Panc1 (cell line): ENCODE measurements at regions of chr7 and their contacts with region 1.

Region 1: DNA sequence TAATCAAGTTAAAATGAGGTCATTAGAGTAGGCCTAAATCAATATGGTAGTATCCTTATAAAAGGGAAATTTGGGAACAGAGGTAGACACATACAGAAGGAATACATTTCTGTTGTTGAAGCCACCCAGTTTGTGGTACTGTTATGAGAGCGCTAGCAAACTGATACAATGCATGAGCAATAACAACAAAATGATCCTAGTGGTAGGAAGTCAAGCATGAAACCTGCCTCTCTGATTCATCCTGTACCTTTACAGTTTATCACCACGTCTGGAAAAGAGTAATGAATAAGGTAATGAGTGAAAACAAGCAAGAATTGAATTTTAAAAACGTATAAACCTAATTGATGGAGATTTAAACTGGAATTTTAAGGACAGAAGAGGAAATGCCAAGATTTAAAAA is 217.2 kb downstream of the PCLO start:
- DNase-seq: no peak
- ATAC-seq: no peak
- H3K4me3 ChIP-seq: no peak overlapping the region
- H3K27ac ChIP-seq: no peak overlapping the region
- H3K4me1 ChIP-seq: no peaks in the 10 kb centered on the region
- H3K27me3 ChIP-seq: no peaks in the 10 kb centered on the region
- CTCF ChIP-seq: no peak

Region 2: GRCh38 chr7:83072576-83073517 is 127.4 kb after region 1 on chr7:
- CTCF ChIA-PET with region 1: no interaction called
- POLR2A ChIA-PET with region 1: interaction called, 17 read pairs
- in situ Hi-C with region 1: no loop called
- intact Hi-C with region 1: no loop called
- DNase-seq: no peak
- ATAC-seq: no peak
- H3K4me3 ChIP-seq: no peak overlapping the region
- H3K27ac ChIP-seq: no peak overlapping the region
- H3K4me1 ChIP-seq: no peaks in the 10 kb centered on the region
- H3K27me3 ChIP-seq: no peaks in the 10 kb centered on the region
- CTCF ChIP-seq: peak; percentile 49; the same call in 1 of the 2 replicates

Region 3: GRCh38 chr7:83524286-83525075 is 579.0 kb after region 1 on chr7:
- CTCF ChIA-PET with region 1: no interaction called
- POLR2A ChIA-PET with region 1: no interaction called
- in situ Hi-C with region 1: no loop called
- intact Hi-C with region 1: no loop called
- DNase-seq: no peak
- ATAC-seq: no peak
- H3K4me3 ChIP-seq: no peak overlapping the region
- H3K27ac ChIP-seq: no peak overlapping the region
- H3K4me1 ChIP-seq: no peaks in the 10 kb centered on the region
- H3K27me3 ChIP-seq: no peaks in the 10 kb centered on the region
- CTCF ChIP-seq: no peak